ENCODE measurements at regions of chr17 and their contacts with region 1.

Region 1: GRCh38 chr17:64506576-64507477 is at the start of gene CEP95:
- DNase-seq: peak; percentile 95
- H3K4me3 Mint-ChIP-seq: peak within 1 kb of the TSS; percentile 92
- H3K27ac Mint-ChIP-seq: peak within 1 kb of the TSS; percentile 99
- H3K4me1 Mint-ChIP-seq: peaks cover 53% of the 10 kb centered on the region
- H3K27me3 Mint-ChIP-seq: no peaks in the 10 kb centered on the region
- total RNA-seq, gene CEP95: 38.8 to 43.3 TPM

Region 2: GRCh38 chr17:63621766-63622519 is 884.9 kb before region 1 on chr17 and contains the start of gene MAP3K3:
- CTCF ChIA-PET with region 1: no interaction called
- intact Hi-C with region 1: loop called (anchors 5 kb)
- DNase-seq: peak; percentile 99
- H3K4me3 Mint-ChIP-seq: peak within 1 kb of the TSS; percentile 97
- H3K27ac Mint-ChIP-seq: peak within 1 kb of the TSS; percentile 82
- H3K4me1 Mint-ChIP-seq: peaks cover 35% of the 10 kb centered on the region
- H3K27me3 Mint-ChIP-seq: no peaks in the 10 kb centered on the region
- total RNA-seq, gene MAP3K3: 28.8 to 29.6 TPM

Region 3: GRCh38 chr17:64020056-64020766 is 486.6 kb before region 1 on chr17 and contains the start of gene ICAM2:
- CTCF ChIA-PET with region 1: no interaction called
- intact Hi-C with region 1: loop called (anchors 1 kb)
- DNase-seq: peak; percentile 95
- H3K4me3 Mint-ChIP-seq: peak within 1 kb of the TSS; percentile 97
- H3K27ac Mint-ChIP-seq: peak within 1 kb of the TSS; percentile 98
- H3K4me1 Mint-ChIP-seq: peaks cover 62% of the 10 kb centered on the region
- H3K27me3 Mint-ChIP-seq: no peaks in the 10 kb centered on the region
- total RNA-seq, gene ICAM2: 41.6 to 41.9 TPM

Region 4: GRCh38 chr17:64491034-64491859 is 15.6 kb before region 1 on chr17:
- CTCF ChIA-PET with region 1: interaction called, 22 read pairs
- intact Hi-C with region 1: loop called (anchors 1 kb)
- DNase-seq: peak; percentile 75
- H3K4me3 Mint-ChIP-seq: no peak overlapping the region
- H3K27ac Mint-ChIP-seq: no peak overlapping the region
- H3K4me1 Mint-ChIP-seq: peaks cover 31% of the 10 kb centered on the region
- H3K27me3 Mint-ChIP-seq: no peaks in the 10 kb centered on the region

Region 5: DNA sequence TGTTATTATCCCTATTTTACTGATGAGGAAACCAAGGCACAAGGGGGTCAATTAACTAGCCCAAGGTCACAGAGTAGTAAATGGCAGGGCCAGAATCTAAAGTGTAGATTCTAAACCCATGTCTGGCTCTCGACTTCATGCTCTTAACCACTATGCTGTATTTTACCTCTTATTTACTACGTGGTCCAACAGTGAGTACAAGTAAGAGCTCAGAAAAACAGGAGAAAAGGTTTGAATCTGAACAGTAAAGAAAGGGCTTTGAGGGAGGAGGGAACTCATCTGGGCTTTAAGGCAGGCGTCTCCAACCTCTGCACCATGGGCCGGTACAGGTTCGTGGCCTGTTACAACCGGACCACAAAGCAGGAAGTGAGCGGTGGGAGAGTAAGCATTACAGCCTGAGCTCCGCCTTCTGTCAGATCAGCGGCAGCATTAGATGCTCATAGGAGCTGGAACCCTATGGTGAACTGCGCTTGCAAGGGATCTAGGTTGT is 92.4 kb after region 1 on chr17:
- CTCF ChIA-PET with region 1: no interaction called
- intact Hi-C with region 1: loop called (anchors 1 kb)
- DNase-seq: peak; percentile 77
- H3K4me3 Mint-ChIP-seq: peak overlapping the region; percentile 77
- H3K27ac Mint-ChIP-seq: peak overlapping the region; percentile 88
- H3K4me1 Mint-ChIP-seq: peaks cover 31% of the 10 kb centered on the region
- H3K27me3 Mint-ChIP-seq: no peaks in the 10 kb centered on the region

Region 6: GRCh38 chr17:64653325-64653984 is 146.6 kb after region 1 on chr17:
- CTCF ChIA-PET with region 1: interaction called, 6 read pairs
- intact Hi-C with region 1: loop called (anchors 1 kb)
- DNase-seq: no peak
- H3K4me3 Mint-ChIP-seq: no peak overlapping the region
- H3K27ac Mint-ChIP-seq: peak overlapping the region; percentile 50
- H3K4me1 Mint-ChIP-seq: peaks cover 45% of the 10 kb centered on the region
- H3K27me3 Mint-ChIP-seq: no peaks in the 10 kb centered on the region

Region 7: DNA sequence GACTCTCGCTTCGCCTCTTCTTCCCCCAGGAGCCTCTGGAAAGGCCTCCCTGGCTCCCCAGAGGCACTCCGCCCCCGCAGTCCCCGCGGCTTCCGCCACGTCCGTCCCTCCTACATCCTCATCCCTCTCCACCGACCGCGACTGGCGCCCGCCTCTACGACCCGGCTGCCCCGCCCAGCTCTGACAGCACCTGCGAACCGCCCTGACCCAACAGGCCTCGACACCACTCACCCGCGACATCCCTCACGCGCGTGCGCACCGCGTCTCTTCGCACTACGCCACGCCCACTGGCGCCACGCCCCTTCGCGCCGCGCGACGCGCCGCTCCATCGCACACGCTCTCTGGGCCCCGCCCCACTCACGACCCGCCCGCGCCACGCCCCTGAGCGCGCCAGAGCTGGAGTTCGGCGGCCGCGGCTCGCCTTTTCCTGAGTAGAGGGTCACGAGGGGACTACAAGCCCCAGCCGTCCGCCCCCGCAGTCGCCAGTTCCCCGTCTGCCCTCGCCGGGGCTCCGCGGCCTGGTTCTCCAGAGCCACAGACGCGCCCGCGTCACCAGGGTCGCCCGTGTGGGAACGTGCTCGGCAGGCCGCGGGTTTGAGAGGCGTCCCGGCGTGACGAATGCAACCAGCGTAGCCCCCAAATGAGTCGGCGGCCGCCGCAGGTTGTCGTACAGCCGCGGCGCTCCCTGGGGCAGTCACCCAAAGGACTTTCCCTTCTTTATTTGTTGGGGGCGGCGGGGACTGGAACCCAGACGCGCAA is 468.7 kb after region 1 on chr17:
- CTCF ChIA-PET with region 1: no interaction called
- intact Hi-C with region 1: loop called (anchors 5 kb)
- DNase-seq: peak; percentile 94
- H3K4me3 Mint-ChIP-seq: peak overlapping the region; percentile 90
- H3K27ac Mint-ChIP-seq: peak overlapping the region; percentile 91
- H3K4me1 Mint-ChIP-seq: peaks cover 45% of the 10 kb centered on the region
- H3K27me3 Mint-ChIP-seq: no peaks in the 10 kb centered on the region